ENCODE measurements at regions of chr9 and their contacts with region 1.

Region 1: DNA sequence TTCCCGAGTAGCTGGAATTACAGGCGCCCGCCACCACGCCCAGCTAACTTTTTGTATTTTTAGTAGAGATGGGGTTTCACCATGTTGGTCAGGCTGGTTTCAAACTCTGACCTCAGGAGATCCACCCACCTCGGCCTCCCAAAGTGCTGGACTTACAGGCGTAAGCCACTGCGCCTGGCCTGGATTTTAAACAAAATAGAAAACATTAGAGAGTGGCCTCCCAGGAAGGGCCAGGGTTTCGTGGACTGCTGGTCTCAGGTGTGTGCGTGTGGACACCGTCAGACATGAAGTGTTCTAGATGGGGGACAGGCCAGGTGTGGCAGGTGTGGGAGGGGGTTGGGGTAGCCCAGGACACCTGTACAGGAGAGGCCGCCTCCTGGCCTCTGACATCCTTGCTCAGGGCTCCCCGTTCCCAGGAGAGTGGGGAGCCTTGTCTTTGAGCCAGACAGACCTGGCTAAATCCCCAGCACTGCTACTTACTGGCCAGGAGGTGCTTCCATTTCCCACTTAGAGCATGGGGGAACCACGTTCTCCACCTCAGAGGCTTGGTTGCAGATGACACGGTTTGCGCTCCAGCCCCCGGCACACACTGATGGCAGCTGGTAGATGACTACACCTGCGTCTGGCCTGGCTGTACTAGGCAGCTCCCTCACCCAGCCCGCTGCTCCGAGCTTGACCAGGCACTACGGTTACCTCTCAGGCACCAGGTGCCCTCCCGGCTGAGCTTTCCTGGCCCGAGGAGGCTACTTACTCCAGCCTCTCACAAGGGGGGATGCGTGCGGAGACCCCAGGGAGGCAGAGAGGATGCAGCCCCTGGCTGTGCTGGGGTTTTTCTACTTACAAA is 7.2 kb upstream of the GBGT1 start:
- DNase-seq: no peak
- H3K4me3 ChIP-seq: no peak overlapping the region
- H3K27ac ChIP-seq: no peak overlapping the region
- H3K4me1 ChIP-seq: no peaks in the 10 kb centered on the region
- H3K27me3 ChIP-seq: peaks cover 2% of the 10 kb centered on the region
- CTCF ChIP-seq: no peak

Region 2: GRCh38 chr9:133030317-133031129 is 140.4 kb before region 1 on chr9 and contains the start of gene GTF3C5:
- CTCF ChIA-PET with region 1: no interaction called
- dilution Hi-C with region 1: loop called (anchors 10 kb)
- in situ Hi-C with region 1: no loop called
- intact Hi-C with region 1: no loop called
- DNase-seq: peak; percentile 99
- H3K4me3 ChIP-seq: peak within 1 kb of the TSS; percentile 93 to 96 (median 94)
- H3K27ac ChIP-seq: peak within 1 kb of the TSS; percentile 87
- H3K4me1 ChIP-seq: peaks cover 15% of the 10 kb centered on the region
- H3K27me3 ChIP-seq: no peaks in the 10 kb centered on the region
- CTCF ChIP-seq: no peak
- total RNA-seq, gene GTF3C5: 28.5 to 54.2 TPM

Region 3: GRCh38 chr9:133108794-133109641 is 61.9 kb before region 1 on chr9:
- CTCF ChIA-PET with region 1: no interaction called
- dilution Hi-C with region 1: no loop called
- in situ Hi-C with region 1: no loop called
- intact Hi-C with region 1: no loop called
- DNase-seq: no peak
- H3K4me3 ChIP-seq: no peak overlapping the region
- H3K27ac ChIP-seq: no peak overlapping the region
- H3K4me1 ChIP-seq: peaks cover 22% of the 10 kb centered on the region
- H3K27me3 ChIP-seq: no peaks in the 10 kb centered on the region
- CTCF ChIP-seq: no peak

Region 4: DNA sequence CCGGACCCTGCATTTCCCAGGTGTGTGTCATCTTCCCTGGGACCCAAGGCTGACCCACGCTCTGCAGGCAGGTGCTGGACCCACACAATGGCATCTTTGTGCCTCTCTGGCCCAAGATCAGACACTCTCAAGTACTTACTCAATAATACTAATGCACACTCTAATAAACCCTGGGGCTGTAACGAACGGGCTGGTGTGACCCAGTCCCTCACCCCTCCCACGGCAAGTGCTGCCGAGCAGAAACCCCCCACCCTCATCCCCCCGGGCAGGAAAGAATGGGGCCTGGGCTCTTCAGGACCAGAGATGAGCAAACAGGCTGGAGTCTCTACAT is 39.2 kb after region 1 on chr9:
- CTCF ChIA-PET with region 1: no interaction called
- dilution Hi-C with region 1: loop called (anchors 5 kb)
- in situ Hi-C with region 1: no loop called
- intact Hi-C with region 1: no loop called
- DNase-seq: peak; percentile 87
- H3K4me3 ChIP-seq: no peak overlapping the region
- H3K27ac ChIP-seq: no peak overlapping the region
- H3K4me1 ChIP-seq: peaks cover 29% of the 10 kb centered on the region
- H3K27me3 ChIP-seq: no peaks in the 10 kb centered on the region
- CTCF ChIP-seq: no peak